CD4-positive, alpha-beta memory T cell (primary cell): ENCODE measurements at regions of chr17 and their contacts with region 1.

Region 1: DNA sequence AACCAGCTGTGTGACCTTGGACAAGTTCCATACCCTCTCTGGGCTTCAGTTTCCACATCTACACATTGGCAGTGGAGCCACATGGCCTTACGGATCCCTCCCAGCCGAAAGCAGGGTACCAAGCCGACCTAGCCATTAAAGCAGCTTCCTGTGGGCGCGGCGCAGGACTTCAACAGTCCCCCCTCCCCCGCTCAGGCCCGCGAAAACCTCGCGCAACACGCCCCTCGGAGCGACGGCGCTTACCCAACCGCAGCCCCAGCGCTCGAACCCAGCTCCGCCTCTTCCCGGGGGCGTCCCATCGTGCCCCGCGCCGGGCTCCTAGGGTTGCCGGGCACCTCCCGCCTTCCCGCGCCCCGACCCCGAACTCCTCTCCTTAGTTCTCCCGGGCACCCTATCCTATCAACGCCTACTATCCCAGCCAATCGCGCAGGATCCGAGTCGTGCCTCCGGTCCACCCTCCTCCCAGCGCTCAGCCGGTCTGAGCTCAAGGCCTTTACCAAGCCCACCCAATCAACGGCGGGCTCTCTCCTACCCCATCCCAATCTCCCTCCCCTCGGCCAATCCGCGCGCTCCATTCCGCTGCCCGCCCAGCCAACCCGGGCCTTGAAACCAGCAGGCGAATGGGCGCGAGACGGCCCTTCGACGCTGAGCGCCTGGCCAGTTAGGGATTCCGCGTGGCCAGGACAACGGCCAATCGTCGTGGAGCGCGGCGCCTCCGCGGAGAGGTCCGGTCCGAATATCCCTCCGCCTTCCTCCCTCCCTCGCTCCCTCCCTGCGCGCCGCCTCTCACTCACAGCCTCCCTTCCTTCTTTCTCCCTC is at the start of gene KPNB1:
- DNase-seq: peak; percentile 98 to 99 (median 98)
- H3K4me3 ChIP-seq: peak within 1 kb of the TSS; percentile 73 to 79
- H3K4me3 Mint-ChIP-seq: peak within 1 kb of the TSS; percentile 97 to 100 (median 100)
- H3K27ac ChIP-seq: peak within 1 kb of the TSS; percentile 82
- H3K27ac Mint-ChIP-seq: peak within 1 kb of the TSS; percentile 91 to 100 (median 99)
- H3K4me1 ChIP-seq: peaks cover 53% of the 10 kb centered on the region
- H3K4me1 Mint-ChIP-seq: peaks cover 37 to 68% (median 41%) of the 10 kb centered on the region in 4 donors
- H3K27me3 ChIP-seq: no peaks in the 10 kb centered on the region
- H3K27me3 Mint-ChIP-seq: no peaks in the 10 kb centered on the region
- total RNA-seq, gene KPNB1: 258 to 268 TPM

Region 2: GRCh38 chr17:47615766-47616424 is 33.5 kb before region 1 on chr17:
- CTCF ChIA-PET with region 1: interaction called, 11 read pairs
- POLR2A ChIA-PET with region 1: interaction called, 12 read pairs
- intact Hi-C with region 1: no loop called
- DNase-seq: peak in 4 of 5 donors; percentile 45 to 54 (median 50)
- H3K4me3 ChIP-seq: no peak overlapping the region
- H3K4me3 Mint-ChIP-seq: no peak overlapping the region
- H3K27ac ChIP-seq: no peak overlapping the region
- H3K27ac Mint-ChIP-seq: peak overlapping the region in 5 of 7 donors; percentile 22 to 80 (median 63)
- H3K4me1 ChIP-seq: no peaks in the 10 kb centered on the region
- H3K4me1 Mint-ChIP-seq: peaks cover 0 to 6% (median 4%) of the 10 kb centered on the region in 4 donors
- H3K27me3 ChIP-seq: no peaks in the 10 kb centered on the region
- H3K27me3 Mint-ChIP-seq: no peaks in the 10 kb centered on the region

Region 3: DNA sequence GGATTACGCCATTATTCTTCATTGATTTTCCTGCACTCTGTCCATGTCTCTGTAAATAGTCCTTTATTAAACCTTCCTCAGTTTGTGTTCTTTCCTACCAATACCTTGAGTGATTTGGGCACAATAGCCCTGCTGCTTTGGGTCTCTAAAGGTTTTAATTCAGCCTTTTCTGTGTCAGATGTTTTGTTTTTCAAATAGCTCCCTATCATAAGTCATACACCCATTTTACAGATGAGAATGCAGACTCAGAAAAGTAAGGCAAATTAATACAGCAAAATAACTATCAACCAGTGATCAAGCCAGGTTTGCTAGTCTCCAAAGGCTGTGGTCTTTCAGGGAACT is 24.7 kb before region 1 on chr17:
- CTCF ChIA-PET with region 1: interaction called, 3 read pairs
- POLR2A ChIA-PET with region 1: interaction called, 11 read pairs
- intact Hi-C with region 1: no loop called
- DNase-seq: no peak
- H3K4me3 ChIP-seq: no peak overlapping the region
- H3K4me3 Mint-ChIP-seq: no peak overlapping the region
- H3K27ac ChIP-seq: no peak overlapping the region
- H3K27ac Mint-ChIP-seq: peak overlapping the region in 2 of 7 donors; percentile 36 to 80
- H3K4me1 ChIP-seq: no peaks in the 10 kb centered on the region
- H3K4me1 Mint-ChIP-seq: peaks cover 0 to 2% (median 0%) of the 10 kb centered on the region in 4 donors
- H3K27me3 ChIP-seq: no peaks in the 10 kb centered on the region
- H3K27me3 Mint-ChIP-seq: no peaks in the 10 kb centered on the region

Region 4: DNA sequence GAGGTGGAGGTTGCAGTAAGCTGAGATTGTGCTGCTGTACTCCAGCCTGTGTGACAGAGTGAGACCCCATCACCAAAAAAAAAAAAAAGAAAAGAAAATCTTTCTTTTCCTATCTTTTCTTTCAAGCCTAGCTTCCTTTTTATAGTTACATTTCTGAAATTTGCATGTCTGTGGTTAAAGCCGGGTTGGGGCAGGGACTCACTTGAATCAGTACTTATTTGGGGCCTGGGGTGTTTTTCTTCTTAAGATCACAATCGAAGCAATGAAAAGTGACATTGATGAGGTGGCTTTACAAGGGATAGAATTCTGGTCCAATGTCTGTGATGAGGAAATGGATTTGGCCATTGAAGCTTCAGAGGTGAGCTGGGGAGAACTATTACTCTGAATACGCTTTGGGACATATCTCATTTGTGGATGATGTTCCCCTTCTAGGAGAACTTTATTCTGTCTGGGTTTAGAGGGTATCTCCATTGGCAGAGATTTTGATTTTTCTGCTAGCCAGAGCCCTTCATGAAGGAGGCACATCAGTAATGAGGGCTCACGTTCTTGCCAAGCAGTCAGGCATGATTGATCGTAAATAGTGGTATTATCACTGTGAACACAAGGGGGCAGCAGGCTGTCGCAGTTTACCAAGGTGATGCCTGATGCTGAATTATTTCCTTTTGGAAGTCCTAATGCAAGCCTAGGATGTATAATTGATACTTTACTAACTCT is 14.7 kb after region 1 on chr17:
- CTCF ChIA-PET with region 1: interaction called, 62 read pairs
- POLR2A ChIA-PET with region 1: interaction called, 120 read pairs
- intact Hi-C with region 1: loop called (anchors 1 kb)
- DNase-seq: peak; percentile 63 to 73 (median 68)
- H3K4me3 ChIP-seq: no peak overlapping the region
- H3K4me3 Mint-ChIP-seq: peak overlapping the region in 1 of 8 donors; percentile 0
- H3K27ac ChIP-seq: peak overlapping the region; percentile 22
- H3K27ac Mint-ChIP-seq: peak overlapping the region; percentile 24 to 90 (median 77)
- H3K4me1 ChIP-seq: peaks cover 32% of the 10 kb centered on the region
- H3K4me1 Mint-ChIP-seq: peaks cover 12 to 22% (median 14%) of the 10 kb centered on the region in 4 donors
- H3K27me3 ChIP-seq: no peaks in the 10 kb centered on the region
- H3K27me3 Mint-ChIP-seq: no peaks in the 10 kb centered on the region

Region 5: GRCh38 chr17:47720754-47721533 is 71.6 kb after region 1 on chr17:
- CTCF ChIA-PET with region 1: no interaction called
- POLR2A ChIA-PET with region 1: interaction called, 12 read pairs
- intact Hi-C with region 1: no loop called
- DNase-seq: peak; percentile 44 to 94 (median 51)
- H3K4me3 ChIP-seq: peak overlapping the region in 1 of 2 donors; percentile 15
- H3K4me3 Mint-ChIP-seq: peak overlapping the region; percentile 35 to 82 (median 65)
- H3K27ac ChIP-seq: no peak overlapping the region
- H3K27ac Mint-ChIP-seq: peak overlapping the region in 4 of 7 donors; percentile 42 to 86 (median 74)
- H3K4me1 ChIP-seq: peaks cover 56% of the 10 kb centered on the region
- H3K4me1 Mint-ChIP-seq: peaks cover 41 to 74% (median 58%) of the 10 kb centered on the region in 4 donors
- H3K27me3 ChIP-seq: no peaks in the 10 kb centered on the region
- H3K27me3 Mint-ChIP-seq: no peaks in the 10 kb centered on the region

Region 6: DNA sequence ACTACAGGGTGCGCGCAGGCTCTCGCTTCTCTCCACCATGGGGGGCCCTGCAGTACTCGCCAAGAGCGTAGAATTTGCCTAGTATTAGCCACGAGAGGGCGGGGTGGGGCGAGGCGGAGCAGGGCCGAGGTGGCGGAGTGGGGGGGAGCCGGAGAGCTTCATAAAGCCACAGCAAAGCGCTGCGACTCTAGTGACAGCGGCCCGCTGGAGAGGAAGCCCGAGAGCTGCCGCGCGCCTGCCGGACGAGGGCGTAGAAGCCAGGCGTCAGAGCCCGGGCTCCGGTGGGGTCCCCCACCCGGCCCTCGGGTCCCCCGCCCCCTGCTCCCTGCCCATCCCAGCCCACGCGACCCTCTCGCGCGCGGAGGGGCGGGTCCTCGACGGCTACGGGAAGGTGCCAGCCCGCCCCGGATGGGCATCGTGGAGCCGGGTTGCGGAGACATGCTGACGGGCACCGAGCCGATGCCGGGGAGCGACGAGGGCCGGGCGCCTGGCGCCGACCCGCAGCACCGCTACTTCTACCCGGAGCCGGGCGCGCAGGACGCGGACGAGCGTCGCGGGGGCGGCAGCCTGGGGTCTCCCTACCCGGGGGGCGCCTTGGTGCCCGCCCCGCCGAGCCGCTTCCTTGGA is 83.8 kb after region 1 on chr17 and contains the start of gene TBX21:
- CTCF ChIA-PET with region 1: interaction called, 3 read pairs
- POLR2A ChIA-PET with region 1: interaction called, 54 read pairs
- intact Hi-C with region 1: no loop called
- DNase-seq: peak; percentile 87 to 93 (median 88)
- H3K4me3 ChIP-seq: peak within 1 kb of the TSS; percentile 72 to 83
- H3K4me3 Mint-ChIP-seq: peak within 1 kb of the TSS; percentile 92 to 100 (median 100)
- H3K27ac ChIP-seq: peak within 1 kb of the TSS; percentile 70
- H3K27ac Mint-ChIP-seq: peak within 1 kb of the TSS; percentile 85 to 99 (median 97)
- H3K4me1 ChIP-seq: peaks cover 40% of the 10 kb centered on the region
- H3K4me1 Mint-ChIP-seq: peaks cover 31 to 83% (median 44%) of the 10 kb centered on the region in 4 donors
- H3K27me3 ChIP-seq: no peaks in the 10 kb centered on the region
- H3K27me3 Mint-ChIP-seq: peaks cover 0 to 1% of the 10 kb centered on the region in 2 donors
- total RNA-seq, gene TBX21: 15.8 to 17.9 TPM

Region 7: GRCh38 chr17:47802341-47803022 is 153.1 kb after region 1 on chr17:
- CTCF ChIA-PET with region 1: no interaction called
- POLR2A ChIA-PET with region 1: no interaction called
- intact Hi-C with region 1: no loop called
- DNase-seq: peak; percentile 52 to 62 (median 57)
- H3K4me3 ChIP-seq: no peak overlapping the region
- H3K4me3 Mint-ChIP-seq: no peak overlapping the region
- H3K27ac ChIP-seq: no peak overlapping the region
- H3K27ac Mint-ChIP-seq: peak overlapping the region in 2 of 7 donors; percentile 56 to 57
- H3K4me1 ChIP-seq: no peaks in the 10 kb centered on the region
- H3K4me1 Mint-ChIP-seq: no peaks in the 10 kb centered on the region
- H3K27me3 ChIP-seq: no peaks in the 10 kb centered on the region
- H3K27me3 Mint-ChIP-seq: peaks cover 1 to 3% of the 10 kb centered on the region in 2 donors

Region 8: DNA sequence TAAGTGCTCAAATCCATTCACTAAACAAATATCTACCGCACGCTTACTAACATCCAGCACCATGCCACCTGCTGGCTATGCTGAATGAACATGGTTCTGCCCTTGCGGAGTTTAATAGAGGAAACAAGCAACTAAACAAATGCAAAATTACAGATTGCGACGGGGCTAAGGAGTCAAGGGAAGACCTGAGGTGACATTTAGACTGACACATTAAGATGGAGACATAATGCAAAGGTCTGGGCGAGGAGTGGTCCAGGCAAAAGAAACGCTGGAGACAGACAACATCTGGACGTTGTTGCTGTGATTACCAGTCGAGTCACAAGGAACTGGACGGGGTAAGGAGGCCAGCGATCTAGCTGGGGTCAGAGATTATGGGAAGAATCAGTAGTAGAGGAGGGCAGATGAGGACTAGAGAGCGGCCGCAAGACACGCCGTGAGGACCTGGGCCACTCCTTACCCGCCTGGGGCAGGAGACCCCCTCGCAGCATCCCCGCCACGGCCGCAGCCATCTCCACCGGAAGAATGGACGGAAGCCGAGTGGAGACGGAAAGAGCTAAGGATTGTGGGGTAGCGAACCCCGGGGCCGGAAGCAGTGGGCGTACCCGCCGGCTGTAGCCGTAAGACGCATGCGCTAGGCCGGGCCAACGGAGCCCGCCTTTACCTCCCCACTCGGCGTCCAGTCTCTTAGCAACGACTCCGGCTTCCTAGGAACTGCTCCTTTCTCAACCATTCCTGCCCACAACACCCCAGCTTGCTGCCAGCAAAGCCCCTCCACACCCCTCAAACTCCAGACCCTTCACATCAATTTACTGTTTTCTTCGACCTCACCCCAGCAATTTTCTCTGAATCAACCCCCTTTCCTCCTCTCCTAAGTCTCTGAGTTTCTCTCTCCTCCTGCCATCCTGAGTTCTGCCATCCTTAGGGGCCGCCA is 181.9 kb after region 1 on chr17 and contains the starts of genes LRRC46 and MRPL10:
- CTCF ChIA-PET with region 1: no interaction called
- POLR2A ChIA-PET with region 1: interaction called, 22 read pairs
- intact Hi-C with region 1: no loop called
- DNase-seq: peak; percentile 90 to 91 (median 91)
- H3K4me3 ChIP-seq: peak within 1 kb of the TSS; percentile 87 to 100
- H3K4me3 Mint-ChIP-seq: peak within 1 kb of the TSS; percentile 86 to 98 (median 95)
- H3K27ac ChIP-seq: peak within 1 kb of the TSS; percentile 82
- H3K27ac Mint-ChIP-seq: peak within 1 kb of the TSS; percentile 86 to 100 (median 98)
- H3K4me1 ChIP-seq: peaks cover 56% of the 10 kb centered on the region
- H3K4me1 Mint-ChIP-seq: peaks cover 37 to 73% (median 49%) of the 10 kb centered on the region in 4 donors
- H3K27me3 ChIP-seq: no peaks in the 10 kb centered on the region
- H3K27me3 Mint-ChIP-seq: no peaks in the 10 kb centered on the region
- total RNA-seq, gene LRRC46: 0.23 to 0.69 TPM
- total RNA-seq, gene MRPL10: 39.6 to 41.4 TPM